Dendritic cell treated with granulocyte-macrophage colony-stimulating factor and Interleukin-4, amounts not matched to agents 40 ng/mL and 50 ng/mL, for 4 days (primary cell): ENCODE measurements at regions of chr5 and their contacts with region 1.

Region 1: DNA sequence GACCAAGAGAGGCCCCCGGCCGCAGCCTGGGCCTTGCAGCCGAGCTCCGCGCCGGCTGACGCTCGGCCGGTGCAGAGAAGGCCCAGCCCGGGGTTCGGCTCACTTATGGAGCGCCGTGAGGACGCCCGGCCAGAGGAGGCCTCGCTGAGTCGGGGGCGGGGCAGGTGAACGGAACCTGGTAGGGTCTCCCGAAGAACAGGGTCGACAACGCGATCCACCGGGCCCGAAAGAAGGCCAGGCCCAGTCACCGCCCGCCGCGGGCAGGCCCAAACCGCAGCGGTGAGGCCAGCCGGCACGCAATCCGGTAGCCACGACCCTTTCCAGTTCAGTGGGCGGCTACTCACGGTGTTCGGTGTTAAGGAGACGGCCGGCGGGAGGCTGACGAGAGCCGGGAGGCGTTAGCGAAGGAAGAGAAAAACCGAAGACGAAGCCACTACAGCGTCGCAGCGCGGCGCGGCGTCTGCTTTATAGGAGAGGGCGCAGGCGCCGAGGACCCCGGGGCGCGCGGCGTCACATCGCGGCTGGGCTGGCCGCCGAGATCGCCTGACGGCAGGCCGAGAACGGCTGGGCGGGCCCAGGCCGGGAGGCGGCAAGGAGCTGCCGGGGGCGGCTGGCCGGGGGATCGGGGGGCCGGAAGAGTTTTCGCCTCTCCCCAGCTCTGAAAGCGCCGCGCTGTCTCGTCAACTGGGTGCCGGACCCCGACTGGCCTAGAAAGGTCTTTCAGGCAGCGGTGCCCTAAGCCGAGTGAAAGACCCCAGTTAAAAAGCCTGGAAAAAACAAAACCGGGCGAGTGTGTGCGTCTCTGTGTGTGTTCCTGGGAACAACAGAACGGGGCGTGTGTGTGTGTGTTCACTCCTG is at the start of gene SKP1:
- H3K4me3 Mint-ChIP-seq: peak within 1 kb of the TSS; percentile 92
- H3K27ac Mint-ChIP-seq: peak within 1 kb of the TSS; percentile 98
- H3K4me1 Mint-ChIP-seq: peaks cover 27% of the 10 kb centered on the region
- H3K27me3 Mint-ChIP-seq: peaks cover 2% of the 10 kb centered on the region

Region 2: GRCh38 chr5:134370871-134371833 is 194.4 kb after region 1 on chr5 and contains the start of gene UBE2B:
- intact Hi-C with region 1: loop called (anchors 2 kb)
- H3K4me3 Mint-ChIP-seq: peak within 1 kb of the TSS; percentile 95
- H3K27ac Mint-ChIP-seq: peak within 1 kb of the TSS; percentile 96
- H3K4me1 Mint-ChIP-seq: peaks cover 51% of the 10 kb centered on the region
- H3K27me3 Mint-ChIP-seq: no peaks in the 10 kb centered on the region

Region 3: DNA sequence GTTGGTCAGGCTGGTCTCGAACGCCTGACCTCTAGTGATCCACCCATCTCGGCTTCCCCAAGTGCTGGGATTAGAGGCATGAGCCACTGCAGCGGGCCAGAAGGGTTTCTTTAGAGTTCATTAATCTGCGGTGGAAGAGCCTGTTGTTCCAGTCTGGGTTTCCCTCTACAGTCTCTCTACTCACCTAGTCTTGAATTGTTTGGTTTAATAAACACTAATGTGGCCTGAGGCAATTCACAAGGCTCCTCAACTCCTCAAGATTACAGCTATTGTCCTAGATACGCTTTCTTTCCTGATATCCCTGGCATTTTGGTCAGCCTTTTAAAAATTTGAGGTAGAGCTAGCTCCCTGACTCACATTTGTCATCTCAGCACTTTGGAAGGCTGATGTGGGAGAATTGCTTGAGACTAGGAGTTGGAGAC is 460.4 kb after region 1 on chr5:
- intact Hi-C with region 1: no loop called
- H3K4me3 Mint-ChIP-seq: no peak overlapping the region
- H3K27ac Mint-ChIP-seq: no peak overlapping the region
- H3K4me1 Mint-ChIP-seq: peaks cover 4% of the 10 kb centered on the region
- H3K27me3 Mint-ChIP-seq: no peaks in the 10 kb centered on the region